Left colon (tissue), 2 donors: ENCODE measurements at regions of chr5 and their contacts with region 1.

Region 1: GRCh38 chr5:115309751-115310370 is 13.4 kb upstream of the CCDC112 start:
- DNase-seq: no peak
- ATAC-seq: no peak

Region 2: DNA sequence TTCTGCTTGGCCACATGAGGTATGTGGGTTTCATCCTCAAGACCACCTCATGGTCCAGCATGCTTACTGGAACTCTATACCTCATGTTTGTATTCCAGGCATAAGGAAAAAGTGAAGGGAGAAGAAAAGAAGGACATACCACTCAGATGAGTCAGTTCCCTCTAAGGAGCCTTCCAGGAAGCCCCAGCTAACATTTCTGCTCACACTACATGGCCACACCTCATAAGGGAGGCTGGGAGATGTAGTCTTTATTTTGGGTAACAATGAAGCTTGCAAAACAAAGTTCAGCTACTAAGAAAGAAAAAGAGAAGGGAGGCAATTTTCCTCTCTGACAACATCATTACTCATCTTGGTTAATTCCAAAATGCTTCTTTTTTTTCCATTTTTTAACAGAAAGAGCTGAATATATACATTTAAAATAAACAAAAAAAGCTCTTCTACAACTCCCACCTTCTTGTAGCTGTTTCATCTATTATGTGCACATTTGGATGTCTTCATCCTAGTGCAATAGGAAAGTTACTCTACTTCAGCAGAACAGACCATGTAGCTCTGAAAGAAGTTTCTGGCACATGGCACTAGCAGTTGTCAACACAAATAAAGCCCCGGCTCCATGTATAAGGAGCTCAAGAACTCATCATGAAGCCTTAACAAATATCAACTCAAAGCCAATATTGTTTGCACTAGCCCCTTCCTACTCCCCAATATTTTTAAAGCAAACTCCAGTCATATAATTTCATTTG is 110.2 kb after region 1 on chr5:
- intact Hi-C with region 1: no loop called
- DNase-seq: no peak
- ATAC-seq: peak; percentile 44

Region 3: DNA sequence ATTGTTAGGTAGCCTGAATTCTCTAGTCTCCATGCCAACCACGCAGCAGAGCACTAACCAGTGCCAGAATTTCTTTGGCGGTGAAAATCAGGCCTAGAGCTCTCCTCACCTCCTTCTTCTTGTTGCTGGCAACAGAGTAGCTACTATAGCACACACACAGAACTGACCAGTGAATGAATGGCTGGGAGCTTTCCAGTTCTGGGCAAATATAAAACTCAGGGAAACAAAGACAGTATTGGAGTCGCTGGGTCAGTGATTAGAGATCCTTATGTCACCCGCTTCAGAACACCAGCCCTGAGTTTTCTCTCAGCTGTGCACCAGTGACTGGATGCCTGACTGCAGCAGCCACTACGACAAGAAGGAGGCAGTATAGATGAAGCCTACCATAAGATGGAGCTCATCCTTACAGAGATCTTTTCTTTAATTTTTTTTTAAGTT is 261.6 kb after region 1 on chr5:
- intact Hi-C with region 1: loop called in 1 of 2 experiments (anchors 5 kb)
- DNase-seq: no peak
- ATAC-seq: no peak

Region 4: GRCh38 chr5:115586601-115587048 is 276.8 kb after region 1 on chr5:
- intact Hi-C with region 1: loop called in 1 of 2 experiments (anchors 5 kb)
- DNase-seq: no peak
- ATAC-seq: peak; percentile 40